ENCODE measurements at regions of chr17 and their contacts with region 1.

Region 1: DNA sequence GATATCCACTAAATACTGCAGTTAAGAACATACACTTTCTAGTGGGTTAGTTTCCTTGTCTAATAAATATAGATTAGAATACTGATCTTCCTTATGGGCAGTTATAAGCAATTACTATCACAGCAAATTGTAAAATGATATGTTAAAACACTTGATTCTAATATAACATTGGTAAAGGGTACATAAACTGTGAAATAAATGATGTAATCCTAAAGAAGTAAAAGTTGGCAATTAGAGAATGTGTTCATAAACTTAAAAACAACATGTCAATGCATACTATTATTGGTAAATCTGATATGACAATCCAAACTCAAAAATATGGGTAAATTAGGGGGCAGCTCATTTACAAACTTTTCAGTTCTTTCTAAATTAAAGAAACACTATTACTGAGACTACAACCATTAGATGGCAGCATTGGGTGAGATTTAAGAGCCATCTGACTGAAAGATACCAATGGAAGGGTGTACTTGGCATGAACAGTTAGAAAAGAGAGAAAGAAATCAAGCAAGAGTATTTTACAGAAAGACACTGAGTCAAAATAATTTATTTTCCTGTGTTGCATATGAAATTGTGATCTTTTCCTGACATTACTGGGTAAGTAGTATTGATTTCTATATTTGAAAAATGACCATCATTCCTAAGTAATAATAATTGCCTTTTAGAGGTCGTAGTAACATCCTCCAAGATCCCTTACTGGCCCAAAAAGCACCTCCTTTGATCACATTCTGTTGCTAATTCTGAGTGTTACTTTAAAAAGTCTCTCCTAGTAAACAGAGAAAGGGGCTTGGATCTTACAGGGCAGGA is 119.6 kb downstream of the SPAG9 start:
- DNase-seq: no peak
- ATAC-seq: peak; percentile 74 to 89 (median 82)
- H3K4me3 ChIP-seq: no peak overlapping the region
- H3K27ac ChIP-seq: no peak overlapping the region
- H3K4me1 ChIP-seq: peaks cover 0 to 6% (median 2%) of the 10 kb centered on the region in 4 donors
- H3K27me3 ChIP-seq: no peaks in the 10 kb centered on the region
- CTCF ChIP-seq: peak; percentile 58 to 67 (median 64)
- POLR2A ChIP-seq: no peak

Region 2: DNA sequence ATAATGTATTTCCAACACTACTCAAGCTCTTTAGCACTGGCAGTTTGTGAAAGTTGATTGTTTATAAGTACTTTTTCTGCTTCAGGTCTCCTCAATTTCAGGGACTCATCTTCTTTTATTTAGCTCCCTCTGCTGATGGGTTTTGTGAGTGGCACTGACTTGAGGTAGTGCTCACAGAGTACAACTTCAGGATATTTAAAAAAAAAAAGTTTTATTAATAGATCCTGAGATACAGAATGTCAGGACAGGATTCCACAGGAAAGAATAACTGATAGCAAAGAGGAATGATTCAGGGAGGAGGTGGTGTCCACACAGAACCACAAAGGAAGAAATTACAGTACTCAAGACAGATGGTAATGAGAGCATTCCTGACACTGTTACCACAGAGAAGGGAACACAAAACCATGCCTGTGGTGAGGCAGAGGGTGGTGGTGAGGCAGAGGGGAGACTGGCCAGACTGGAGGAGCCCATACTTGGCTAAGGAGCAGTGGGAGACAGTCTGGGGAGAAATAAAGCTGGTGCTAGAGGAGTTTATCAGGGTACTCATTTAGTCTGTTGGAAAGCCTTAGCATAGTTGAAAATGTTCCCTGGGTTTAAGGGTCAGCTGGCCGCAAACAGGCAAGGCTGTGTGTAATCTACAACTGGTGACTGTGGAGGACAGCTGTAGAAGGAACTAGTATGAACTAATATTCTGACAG is 55.9 kb after region 1 on chr17:
- intact Hi-C with region 1: loop called in 1 of 2 experiments (anchors 10 kb)
- DNase-seq: peak in 1 of 3 donors; percentile 54
- ATAC-seq: peak; percentile 92 to 95 (median 92)
- H3K4me3 ChIP-seq: no peak overlapping the region
- H3K27ac ChIP-seq: peak overlapping the region; percentile 27 to 69 (median 45)
- H3K4me1 ChIP-seq: peaks cover 0 to 23% (median 10%) of the 10 kb centered on the region in 4 donors
- H3K27me3 ChIP-seq: no peaks in the 10 kb centered on the region
- CTCF ChIP-seq: peak; percentile 48 to 67 (median 63)
- POLR2A ChIP-seq: no peak

Measured in right lobe of liver (tissue), 6 donors.